ENCODE measurements at regions of chr12 and their contacts with region 1.

Region 1: GRCh38 chr12:113221181-113221997 is at the start of gene TPCN1:
- DNase-seq: peak; percentile 94 to 99 (median 99)
- ATAC-seq: peak; percentile 97
- H3K4me3 ChIP-seq: peak within 1 kb of the TSS; percentile 70
- H3K4me3 Mint-ChIP-seq: peak within 1 kb of the TSS; percentile 79 to 99 (median 92)
- H3K27ac ChIP-seq: peak within 1 kb of the TSS; percentile 83
- H3K27ac Mint-ChIP-seq: peak within 1 kb of the TSS; percentile 81 to 97 (median 92)
- H3K4me1 ChIP-seq: peaks cover 17 to 32% of the 10 kb centered on the region in 2 donors
- H3K4me1 Mint-ChIP-seq: peaks cover 24 to 49% (median 45%) of the 10 kb centered on the region in 7 donors
- H3K27me3 ChIP-seq: no peaks in the 10 kb centered on the region
- H3K27me3 Mint-ChIP-seq: no peaks in the 10 kb centered on the region
- total RNA-seq, gene TPCN1: 49.5 to 124 (median 107) TPM

Region 2: GRCh38 chr12:112937741-112938719 is 283.4 kb before region 1 on chr12 and contains the start of gene OAS3:
- CTCF ChIA-PET with region 1: no interaction called
- POLR2A ChIA-PET with region 1: no interaction called
- intact Hi-C with region 1: loop called in 1 of 2 experiments (anchors 5 kb)
- DNase-seq: peak; percentile 31 to 79 (median 50)
- ATAC-seq: peak; percentile 84
- H3K4me3 ChIP-seq: peak within 1 kb of the TSS; percentile 78
- H3K4me3 Mint-ChIP-seq: peak within 1 kb of the TSS; percentile 85 to 100 (median 93)
- H3K27ac ChIP-seq: peak within 1 kb of the TSS; percentile 82
- H3K27ac Mint-ChIP-seq: peak within 1 kb of the TSS; percentile 90 to 97 (median 95)
- H3K4me1 ChIP-seq: peaks cover 18 to 19% of the 10 kb centered on the region in 2 donors
- H3K4me1 Mint-ChIP-seq: peaks cover 22 to 61% (median 31%) of the 10 kb centered on the region in 7 donors
- H3K27me3 ChIP-seq: no peaks in the 10 kb centered on the region
- H3K27me3 Mint-ChIP-seq: no peaks in the 10 kb centered on the region
- total RNA-seq, gene OAS3: 17.8 to 264 (median 21.6) TPM

Region 3: GRCh38 chr12:113152835-113153814 is 68.3 kb before region 1 on chr12:
- CTCF ChIA-PET with region 1: no interaction called
- POLR2A ChIA-PET with region 1: no interaction called
- intact Hi-C with region 1: loop called in 1 of 2 experiments (anchors 2 kb)
- DNase-seq: peak; percentile 36 to 86 (median 80)
- ATAC-seq: peak; percentile 94
- H3K4me3 ChIP-seq: peak overlapping the region; percentile 75
- H3K4me3 Mint-ChIP-seq: peak overlapping the region; percentile 76 to 88 (median 86)
- H3K27ac ChIP-seq: no peak overlapping the region
- H3K27ac Mint-ChIP-seq: peak overlapping the region in 6 of 9 donors; percentile 76 to 93 (median 85)
- H3K4me1 ChIP-seq: peaks cover 0 to 19% of the 10 kb centered on the region in 2 donors
- H3K4me1 Mint-ChIP-seq: peaks cover 0 to 27% (median 25%) of the 10 kb centered on the region in 7 donors
- H3K27me3 ChIP-seq: no peaks in the 10 kb centered on the region
- H3K27me3 Mint-ChIP-seq: peaks cover 0 to 36% (median 0%) of the 10 kb centered on the region in 5 donors

Region 4: GRCh38 chr12:113196996-113197395 is 24.4 kb before region 1 on chr12:
- CTCF ChIA-PET with region 1: no interaction called
- POLR2A ChIA-PET with region 1: interaction called, 4 read pairs
- intact Hi-C with region 1: loop called (anchors 1 kb)
- DNase-seq: peak in 8 of 9 donors; percentile 42 to 69 (median 57)
- ATAC-seq: peak; percentile 99
- H3K4me3 ChIP-seq: no peak overlapping the region
- H3K4me3 Mint-ChIP-seq: no peak overlapping the region
- H3K27ac ChIP-seq: no peak overlapping the region
- H3K27ac Mint-ChIP-seq: peak overlapping the region in 1 of 9 donors; percentile 13
- H3K4me1 ChIP-seq: no peaks in the 10 kb centered on the region
- H3K4me1 Mint-ChIP-seq: peaks cover 0 to 16% (median 4%) of the 10 kb centered on the region in 7 donors
- H3K27me3 ChIP-seq: no peaks in the 10 kb centered on the region
- H3K27me3 Mint-ChIP-seq: no peaks in the 10 kb centered on the region

Region 5: GRCh38 chr12:113232840-113233585 is 11.6 kb after region 1 on chr12:
- CTCF ChIA-PET with region 1: interaction called, 17 read pairs
- POLR2A ChIA-PET with region 1: interaction called, 51 read pairs
- intact Hi-C with region 1: loop called (anchors 1 kb)
- DNase-seq: peak; percentile 46 to 91 (median 83)
- ATAC-seq: peak; percentile 95
- H3K4me3 ChIP-seq: peak overlapping the region; percentile 43
- H3K4me3 Mint-ChIP-seq: peak overlapping the region; percentile 81 to 94 (median 86)
- H3K27ac ChIP-seq: peak overlapping the region; percentile 68
- H3K27ac Mint-ChIP-seq: peak overlapping the region; percentile 86 to 96 (median 93)
- H3K4me1 ChIP-seq: peaks cover 7 to 60% of the 10 kb centered on the region in 2 donors
- H3K4me1 Mint-ChIP-seq: peaks cover 59 to 93% (median 75%) of the 10 kb centered on the region in 7 donors
- H3K27me3 ChIP-seq: no peaks in the 10 kb centered on the region
- H3K27me3 Mint-ChIP-seq: no peaks in the 10 kb centered on the region

Region 6: DNA sequence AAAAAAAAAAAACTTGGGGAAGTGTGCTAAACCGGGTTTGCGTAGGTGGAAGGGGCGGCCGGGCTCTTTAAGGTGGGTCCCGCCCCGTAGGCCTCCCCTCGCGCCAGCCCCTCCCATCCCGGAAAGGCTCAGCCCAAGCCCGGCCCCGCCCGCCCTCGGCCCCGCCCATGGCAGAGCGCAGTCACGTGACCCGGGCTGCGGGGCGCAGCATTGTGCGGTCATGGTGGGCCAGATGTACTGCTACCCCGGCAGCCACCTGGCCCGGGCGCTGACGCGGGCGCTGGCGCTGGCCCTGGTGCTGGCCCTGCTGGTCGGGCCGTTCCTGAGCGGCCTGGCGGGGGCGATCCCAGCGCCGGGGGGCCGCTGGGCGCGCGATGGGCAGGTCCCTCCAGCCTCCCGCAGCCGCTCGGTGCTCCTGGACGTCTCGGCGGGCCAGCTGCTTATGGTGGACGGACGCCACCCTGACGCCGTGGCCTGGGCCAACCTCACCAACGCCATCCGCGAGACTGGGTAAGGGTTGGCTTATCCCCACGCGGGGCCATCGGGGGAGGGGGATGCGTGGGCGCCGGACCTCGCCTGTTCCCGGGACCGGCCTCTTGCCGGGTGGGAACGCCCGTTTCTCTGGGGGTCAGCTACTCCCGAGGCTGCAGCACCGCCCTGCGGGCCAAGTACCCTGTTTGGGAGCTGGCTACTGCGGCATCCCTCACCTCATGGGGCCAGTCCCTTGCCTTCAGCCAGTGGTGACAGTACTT is 137.2 kb after region 1 on chr12 and contains the start of gene PLBD2:
- CTCF ChIA-PET with region 1: no interaction called
- POLR2A ChIA-PET with region 1: interaction called, 5 read pairs
- intact Hi-C with region 1: loop called (anchors 1 kb)
- DNase-seq: peak; percentile 85 to 95 (median 92)
- ATAC-seq: peak; percentile 98
- H3K4me3 ChIP-seq: peak within 1 kb of the TSS; percentile 82
- H3K4me3 Mint-ChIP-seq: peak within 1 kb of the TSS; percentile 83 to 94 (median 91)
- H3K27ac ChIP-seq: peak within 1 kb of the TSS; percentile 85
- H3K27ac Mint-ChIP-seq: peak within 1 kb of the TSS; percentile 79 to 98 (median 95)
- H3K4me1 ChIP-seq: peaks cover 0 to 5% of the 10 kb centered on the region in 2 donors
- H3K4me1 Mint-ChIP-seq: peaks cover 13 to 25% (median 17%) of the 10 kb centered on the region in 7 donors
- H3K27me3 ChIP-seq: no peaks in the 10 kb centered on the region
- H3K27me3 Mint-ChIP-seq: peaks cover 0 to 3% (median 0%) of the 10 kb centered on the region in 5 donors
- total RNA-seq, gene PLBD2: 13.2 to 25.4 (median 14.9) TPM

Region 7: GRCh38 chr12:113831016-113831415 is 609.6 kb after region 1 on chr12:
- CTCF ChIA-PET with region 1: no interaction called
- POLR2A ChIA-PET with region 1: no interaction called
- intact Hi-C with region 1: no loop called
- DNase-seq: no peak
- ATAC-seq: no peak
- H3K4me3 ChIP-seq: no peak overlapping the region
- H3K4me3 Mint-ChIP-seq: no peak overlapping the region
- H3K27ac ChIP-seq: no peak overlapping the region
- H3K27ac Mint-ChIP-seq: no peak overlapping the region
- H3K4me1 ChIP-seq: no peaks in the 10 kb centered on the region
- H3K4me1 Mint-ChIP-seq: peaks cover 0 to 6% (median 0%) of the 10 kb centered on the region in 7 donors
- H3K27me3 ChIP-seq: no peaks in the 10 kb centered on the region
- H3K27me3 Mint-ChIP-seq: no peaks in the 10 kb centered on the region

Measured in naive thymus-derived CD4-positive, alpha-beta T cell (primary cell).